Astrocyte of the cerebellum (primary cell): ENCODE measurements at regions of chrX and their contacts with region 1.

Region 1: DNA sequence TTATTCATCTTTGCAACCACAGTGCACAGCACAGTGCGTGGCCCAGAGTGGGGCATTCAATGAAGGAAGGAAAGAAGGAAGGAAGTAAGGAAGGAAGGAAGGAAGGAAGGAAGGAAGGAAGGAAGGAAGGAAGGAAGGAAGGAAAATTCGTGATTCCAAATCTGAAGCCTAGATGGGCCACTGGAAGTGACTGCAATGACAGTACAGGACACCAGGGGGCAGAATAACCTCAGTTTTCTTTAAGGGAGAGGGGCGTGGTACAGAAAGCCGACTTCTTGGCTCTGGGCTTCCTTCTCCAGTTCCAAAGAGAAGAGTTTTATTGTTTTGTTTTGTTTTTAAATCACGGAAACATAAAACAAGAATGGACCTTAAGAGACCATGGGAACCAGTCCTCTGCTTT is 47.8 kb downstream of the APLN start:
- DNase-seq: peak; percentile 24
- H3K4me3 ChIP-seq: no peak overlapping the region
- CTCF ChIP-seq: peak; percentile 71

Region 2: DNA sequence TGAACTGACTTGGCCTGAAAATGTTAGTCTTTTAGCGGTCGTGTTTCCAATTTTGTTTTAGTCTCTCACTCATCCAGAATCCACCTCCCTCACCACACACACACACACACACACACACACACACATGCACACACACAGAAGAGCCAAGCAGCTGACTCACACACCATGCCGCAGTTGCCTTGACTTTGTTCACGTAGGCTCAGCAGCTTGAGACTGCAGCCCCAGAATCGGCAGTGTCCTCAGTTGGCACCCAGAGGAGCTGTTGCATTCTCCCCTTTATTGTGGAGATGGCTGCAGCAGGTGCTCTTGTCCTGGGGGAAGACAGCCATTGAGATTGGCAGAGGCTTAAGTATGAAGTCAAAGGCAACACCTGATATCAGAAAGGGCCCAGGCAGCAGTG is 111.0 kb after region 1 on chrX:
- in situ Hi-C with region 1: loop called (anchors 25 kb)
- DNase-seq: no peak
- H3K4me3 ChIP-seq: no peak overlapping the region
- CTCF ChIP-seq: no peak

Region 3: DNA sequence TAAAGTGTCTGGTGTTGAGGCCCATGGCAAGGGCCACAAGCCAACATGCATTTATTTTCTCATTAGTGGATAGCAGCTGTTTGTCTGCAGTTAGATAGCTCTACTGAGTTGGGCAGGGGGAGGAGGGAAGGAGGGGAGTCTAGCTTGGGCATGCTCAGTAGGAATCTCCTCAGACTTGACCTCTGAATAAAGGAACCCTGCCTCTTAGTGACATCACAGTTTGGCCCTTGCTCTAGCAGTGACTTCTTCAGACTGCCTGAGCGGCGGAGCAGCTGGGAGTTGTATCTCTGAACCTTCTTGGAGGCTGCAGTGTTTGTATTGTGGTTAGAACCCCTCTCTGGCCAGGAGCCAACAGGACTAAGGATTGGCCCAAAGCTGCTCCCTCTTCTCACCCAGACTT is 432.9 kb after region 1 on chrX:
- in situ Hi-C with region 1: loop called (anchors 10 kb)
- DNase-seq: no peak
- H3K4me3 ChIP-seq: no peak overlapping the region
- CTCF ChIP-seq: no peak